A673 (cell line): ENCODE measurements at regions of chr12 and their contacts with region 1.

Region 1: GRCh38 chr12:100348657-100349454 is 8.0 kb upstream of the SLC17A8 start:
- DNase-seq: peak; percentile 42
- H3K4me3 ChIP-seq: no peak overlapping the region
- H3K27ac ChIP-seq: no peak overlapping the region
- H3K4me1 ChIP-seq: no peaks in the 10 kb centered on the region
- H3K27me3 ChIP-seq: no peaks in the 10 kb centered on the region
- CTCF ChIP-seq: peak; percentile 54

Region 2: DNA sequence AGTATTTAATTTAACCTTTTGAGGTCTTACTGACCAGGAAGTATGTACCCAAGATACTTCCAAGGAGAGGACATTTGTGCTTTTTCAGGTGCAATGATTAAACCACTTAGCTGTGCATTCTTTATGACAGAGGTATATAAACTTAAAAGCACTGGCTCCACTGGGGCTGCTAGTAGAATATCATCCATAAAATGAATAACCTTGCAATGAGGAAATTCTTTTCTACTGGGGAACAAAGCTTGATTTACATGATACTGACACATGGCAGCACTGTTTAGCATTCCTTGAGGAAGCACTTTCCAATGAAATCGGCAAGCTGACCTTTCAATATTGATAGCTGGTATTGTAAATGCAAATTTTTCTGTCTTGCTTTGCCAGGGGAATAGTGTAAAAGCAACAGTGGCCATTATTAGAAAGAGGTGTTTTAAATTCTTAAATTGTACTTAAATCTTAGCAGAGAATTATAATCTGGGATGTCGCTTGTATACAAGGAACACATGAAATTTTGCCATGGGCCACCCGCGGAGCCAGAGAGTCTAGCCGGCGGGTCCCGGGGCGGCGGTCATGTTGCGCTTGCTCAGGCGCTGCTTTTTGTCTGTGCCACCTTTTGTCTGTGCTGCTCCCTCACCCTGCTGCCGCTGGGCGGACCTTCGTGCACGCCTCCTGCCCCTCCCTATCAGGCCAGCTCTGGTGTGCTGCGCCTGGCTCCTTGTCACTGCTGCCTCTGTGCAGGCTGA is 185.3 kb before region 1 on chr12:
- CTCF ChIA-PET with region 1: no interaction called
- POLR2A ChIA-PET with region 1: no interaction called
- intact Hi-C with region 1: no loop called
- DNase-seq: peak; percentile 82
- H3K4me3 ChIP-seq: peak overlapping the region; percentile 9
- H3K27ac ChIP-seq: no peak overlapping the region
- H3K4me1 ChIP-seq: peaks cover 10% of the 10 kb centered on the region
- H3K27me3 ChIP-seq: no peaks in the 10 kb centered on the region
- CTCF ChIP-seq: 0 out of 2 replicates have a peak, but pooled peaks have one; percentile 17

Region 3: DNA sequence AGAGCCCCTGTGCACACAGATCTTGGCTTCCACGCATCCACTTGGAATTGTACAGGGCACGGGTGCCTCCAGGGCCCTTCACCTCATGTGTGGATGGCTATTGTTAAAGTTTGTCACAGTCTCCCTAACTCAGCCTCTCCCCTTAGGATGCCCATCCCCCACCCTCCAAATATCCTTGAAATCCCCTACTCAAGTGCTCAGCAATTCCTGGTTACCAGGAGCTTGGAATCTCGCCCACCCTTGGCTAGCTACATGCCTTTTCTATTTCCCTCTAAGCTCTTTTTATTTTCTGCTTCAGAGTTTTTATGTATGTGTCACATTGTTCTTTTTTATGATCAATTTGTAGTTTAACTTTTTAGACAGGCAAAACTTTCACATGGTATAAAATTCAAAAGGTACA is 111.8 kb after region 1 on chr12:
- CTCF ChIA-PET with region 1: no interaction called
- POLR2A ChIA-PET with region 1: interaction called, 11 read pairs
- intact Hi-C with region 1: no loop called
- DNase-seq: no peak
- H3K4me3 ChIP-seq: no peak overlapping the region
- H3K27ac ChIP-seq: no peak overlapping the region
- H3K4me1 ChIP-seq: no peaks in the 10 kb centered on the region
- H3K27me3 ChIP-seq: no peaks in the 10 kb centered on the region
- CTCF ChIP-seq: no peak

Region 4: GRCh38 chr12:100554608-100555077 is 205.8 kb after region 1 on chr12:
- CTCF ChIA-PET with region 1: interaction called, 4 read pairs
- POLR2A ChIA-PET with region 1: no interaction called
- intact Hi-C with region 1: loop called (anchors 1 kb)
- DNase-seq: peak; percentile 80
- H3K4me3 ChIP-seq: no peak overlapping the region
- H3K27ac ChIP-seq: no peak overlapping the region
- H3K4me1 ChIP-seq: peaks cover 5% of the 10 kb centered on the region
- H3K27me3 ChIP-seq: no peaks in the 10 kb centered on the region
- CTCF ChIP-seq: peak; percentile 76

Region 5: DNA sequence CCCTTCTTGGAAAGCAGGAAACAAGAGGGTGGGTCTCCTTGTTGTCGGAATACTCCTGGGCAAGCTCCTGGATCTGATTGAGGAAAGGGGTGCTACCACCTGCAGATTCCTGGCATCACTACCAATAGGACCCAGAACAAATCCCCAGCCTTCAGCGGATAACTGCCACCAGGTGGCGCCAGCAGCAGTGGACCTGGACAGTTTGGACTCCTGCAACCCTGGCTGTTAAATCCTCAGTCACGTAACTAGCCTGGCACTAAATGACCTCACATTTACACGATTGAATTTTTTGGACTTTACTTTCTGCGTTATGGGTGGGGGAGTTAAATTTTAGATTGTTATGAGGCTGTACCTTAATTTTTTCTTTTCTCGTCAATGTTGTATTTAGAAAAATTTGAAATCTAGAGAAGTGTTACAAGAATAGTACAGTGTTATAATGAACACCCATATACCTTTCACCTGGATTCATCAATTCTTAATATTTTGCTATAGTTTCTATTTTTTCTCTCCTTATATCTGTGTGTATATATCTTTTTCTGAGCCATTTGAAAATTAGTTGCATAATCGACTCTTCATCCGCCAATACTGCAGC is 320.2 kb after region 1 on chr12:
- CTCF ChIA-PET with region 1: interaction called, 4 read pairs
- POLR2A ChIA-PET with region 1: no interaction called
- intact Hi-C with region 1: loop called (anchors 5 kb)
- DNase-seq: peak; percentile 75
- H3K4me3 ChIP-seq: no peak overlapping the region
- H3K27ac ChIP-seq: no peak overlapping the region
- H3K4me1 ChIP-seq: no peaks in the 10 kb centered on the region
- H3K27me3 ChIP-seq: no peaks in the 10 kb centered on the region
- CTCF ChIP-seq: peak; percentile 98

Region 6: GRCh38 chr12:100733817-100734593 is 385.1 kb after region 1 on chr12:
- CTCF ChIA-PET with region 1: no interaction called
- POLR2A ChIA-PET with region 1: no interaction called
- intact Hi-C with region 1: loop called (anchors 2 kb)
- DNase-seq: peak; percentile 59
- H3K4me3 ChIP-seq: no peak overlapping the region
- H3K27ac ChIP-seq: no peak overlapping the region
- H3K4me1 ChIP-seq: no peaks in the 10 kb centered on the region
- H3K27me3 ChIP-seq: peaks cover 6% of the 10 kb centered on the region
- CTCF ChIP-seq: peak; percentile 72

Region 7: DNA sequence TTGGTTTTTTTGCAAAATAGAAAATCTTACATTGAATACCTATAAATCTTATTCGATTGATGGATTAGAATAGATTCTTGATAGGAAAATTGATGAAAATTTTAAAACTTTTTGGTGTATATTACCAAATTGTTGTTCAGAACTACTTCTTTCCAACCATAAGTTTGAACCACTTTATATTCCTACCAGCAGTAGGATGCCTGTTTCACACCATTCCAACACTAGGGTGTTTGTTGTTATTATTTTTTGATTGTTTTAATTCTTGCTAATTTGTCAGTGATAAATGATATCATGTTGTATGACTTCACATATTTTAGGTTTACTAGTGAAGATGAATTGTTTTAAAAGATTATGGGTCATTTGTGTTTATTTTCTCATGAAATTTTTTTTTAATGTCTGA is 974.4 kb after region 1 on chr12:
- CTCF ChIA-PET with region 1: no interaction called
- POLR2A ChIA-PET with region 1: no interaction called
- intact Hi-C with region 1: loop called (anchors 5 kb)
- DNase-seq: no peak
- H3K4me3 ChIP-seq: no peak overlapping the region
- H3K27ac ChIP-seq: no peak overlapping the region
- H3K4me1 ChIP-seq: no peaks in the 10 kb centered on the region
- H3K27me3 ChIP-seq: no peaks in the 10 kb centered on the region
- CTCF ChIP-seq: no peak